ENCODE measurements at regions of chr5 and their contacts with region 1.

Region 1: GRCh38 chr5:137370096-137371071 is 128.7 kb downstream of the SPOCK1 start:
- DNase-seq: peak; percentile 41 to 89
- H3K4me3 ChIP-seq: no peak overlapping the region
- H3K27ac ChIP-seq: peak overlapping the region; percentile 54
- H3K4me1 ChIP-seq: peaks cover 33% of the 10 kb centered on the region
- H3K27me3 ChIP-seq: no peaks in the 10 kb centered on the region
- CTCF ChIP-seq: no peak

Region 2: DNA sequence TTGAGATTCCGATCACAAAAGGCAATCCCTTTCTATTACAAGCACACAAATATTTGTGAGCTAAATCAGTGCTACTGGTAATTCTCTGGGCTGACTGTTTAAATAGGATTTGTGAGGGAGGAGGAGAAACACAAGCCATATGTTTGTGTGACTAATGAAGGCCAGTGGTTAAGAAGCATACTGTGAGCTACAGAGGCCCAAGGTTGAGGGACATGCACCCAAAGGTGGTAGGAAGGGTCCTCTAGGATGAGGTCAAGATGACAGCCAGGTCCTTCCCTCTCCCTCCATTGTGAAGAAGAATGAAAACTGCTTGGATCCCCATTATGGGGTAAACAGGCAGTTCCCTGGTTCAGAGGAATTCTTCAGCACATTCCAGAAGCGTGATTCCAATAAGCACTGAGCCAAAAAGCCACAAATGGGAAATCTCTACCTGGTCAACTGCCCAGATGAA is 44.9 kb after region 1 on chr5:
- CTCF ChIA-PET with region 1: no interaction called
- POLR2A ChIA-PET with region 1: no interaction called
- intact Hi-C with region 1: loop called (anchors 1 kb)
- DNase-seq: peak in 1 of 2 experiments; percentile 14
- H3K4me3 ChIP-seq: no peak overlapping the region
- H3K27ac ChIP-seq: no peak overlapping the region
- H3K4me1 ChIP-seq: no peaks in the 10 kb centered on the region
- H3K27me3 ChIP-seq: no peaks in the 10 kb centered on the region
- CTCF ChIP-seq: no peak